Thyroid gland (tissue), 4 donors: ENCODE measurements at regions of chr7 and their contacts with region 1.

Region 1: GRCh38 chr7:22559829-22560489 is 60.0 kb upstream of the STEAP1B start:
- DNase-seq: peak; percentile 76 to 77
- H3K4me3 ChIP-seq: no peak overlapping the region
- H3K27ac ChIP-seq: no peak overlapping the region
- H3K4me1 ChIP-seq: peaks cover 5 to 40% of the 10 kb centered on the region in 2 donors
- H3K27me3 ChIP-seq: no peaks in the 10 kb centered on the region
- CTCF ChIP-seq: peak; percentile 67 to 100 (median 88)
- POLR2A ChIP-seq: no peak

Region 2: GRCh38 chr7:22726345-22727185 is 166.6 kb after region 1 on chr7:
- intact Hi-C with region 1: loop called (anchors 5 kb)
- DNase-seq: peak; percentile 80 to 81
- H3K4me3 ChIP-seq: peak overlapping the region in 1 of 3 donors; percentile 31
- H3K27ac ChIP-seq: peak overlapping the region; percentile 72 to 78 (median 75)
- H3K4me1 ChIP-seq: peaks cover 30 to 46% of the 10 kb centered on the region in 2 donors
- H3K27me3 ChIP-seq: no peaks in the 10 kb centered on the region
- CTCF ChIP-seq: peak in 5 of 6 experiments; percentile 43 to 87 (median 69)
- POLR2A ChIP-seq: no peak

Region 3: GRCh38 chr7:22782616-22783232 is 222.8 kb after region 1 on chr7:
- intact Hi-C with region 1: loop called (anchors 5 kb)
- DNase-seq: peak; percentile 71 to 76
- H3K4me3 ChIP-seq: no peak overlapping the region
- H3K27ac ChIP-seq: no peak overlapping the region
- H3K4me1 ChIP-seq: no peaks in the 10 kb centered on the region
- H3K27me3 ChIP-seq: no peaks in the 10 kb centered on the region
- CTCF ChIP-seq: peak in 5 of 6 experiments; percentile 42 to 76 (median 66)
- POLR2A ChIP-seq: no peak

Region 4: DNA sequence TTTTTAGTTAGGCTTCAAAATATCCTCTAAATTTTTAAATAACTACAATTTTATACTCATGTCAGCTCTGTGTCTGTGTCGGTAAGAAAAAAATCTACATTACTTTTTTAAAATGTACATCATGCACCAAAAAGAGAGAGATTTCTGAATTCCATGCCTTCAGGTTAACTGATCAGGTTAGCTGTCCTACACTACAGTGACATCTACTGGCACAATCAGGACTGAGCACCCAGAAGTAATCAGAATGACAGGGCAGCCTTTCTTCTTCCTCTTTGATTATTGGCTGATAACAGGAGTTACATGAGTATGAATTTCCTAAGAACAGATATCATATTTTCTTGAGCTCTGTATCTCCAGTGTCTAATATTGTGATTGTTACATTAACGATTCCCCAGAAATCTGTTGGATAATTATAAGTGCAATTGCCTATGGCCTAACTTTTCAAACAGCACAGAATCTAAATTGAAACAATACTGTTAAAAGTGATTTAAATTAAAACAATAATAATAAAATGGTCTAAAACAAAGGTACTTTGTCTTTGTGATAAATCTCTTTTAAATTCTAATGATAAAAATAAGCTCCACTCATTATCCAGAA is 495.7 kb after region 1 on chr7:
- intact Hi-C with region 1: loop called (anchors 5 kb)
- DNase-seq: peak; percentile 39 to 41
- H3K4me3 ChIP-seq: no peak overlapping the region
- H3K27ac ChIP-seq: no peak overlapping the region
- H3K4me1 ChIP-seq: no peaks in the 10 kb centered on the region
- H3K27me3 ChIP-seq: no peaks in the 10 kb centered on the region
- CTCF ChIP-seq: peak; percentile 54 to 91 (median 80)
- POLR2A ChIP-seq: no peak